Breast epithelium (tissue), 4 donors: ENCODE measurements at regions of chr5 and their contacts with region 1.

Region 1: GRCh38 chr5:168020542-168021294 is 270.7 kb upstream of the WWC1 start:
- DNase-seq: no peak
- H3K4me3 ChIP-seq: no peak overlapping the region
- H3K27ac ChIP-seq: no peak overlapping the region
- H3K4me1 ChIP-seq: no peaks in the 10 kb centered on the region
- H3K27me3 ChIP-seq: peaks cover 0 to 7% of the 10 kb centered on the region in 2 donors
- CTCF ChIP-seq: no peak
- POLR2A ChIP-seq: no peak

Region 2: GRCh38 chr5:167992868-167993267 is 27.9 kb before region 1 on chr5:
- intact Hi-C with region 1: loop called (anchors 1 kb)
- DNase-seq: no peak
- H3K4me3 ChIP-seq: no peak overlapping the region
- H3K27ac ChIP-seq: no peak overlapping the region
- H3K4me1 ChIP-seq: no peaks in the 10 kb centered on the region
- H3K27me3 ChIP-seq: no peaks in the 10 kb centered on the region
- CTCF ChIP-seq: no peak
- POLR2A ChIP-seq: no peak

Region 3: GRCh38 chr5:168006456-168007130 is 14.1 kb before region 1 on chr5:
- intact Hi-C with region 1: loop called (anchors 1 kb)
- DNase-seq: no peak
- H3K4me3 ChIP-seq: no peak overlapping the region
- H3K27ac ChIP-seq: no peak overlapping the region
- H3K4me1 ChIP-seq: no peaks in the 10 kb centered on the region
- H3K27me3 ChIP-seq: no peaks in the 10 kb centered on the region
- CTCF ChIP-seq: no peak
- POLR2A ChIP-seq: no peak

Region 4: DNA sequence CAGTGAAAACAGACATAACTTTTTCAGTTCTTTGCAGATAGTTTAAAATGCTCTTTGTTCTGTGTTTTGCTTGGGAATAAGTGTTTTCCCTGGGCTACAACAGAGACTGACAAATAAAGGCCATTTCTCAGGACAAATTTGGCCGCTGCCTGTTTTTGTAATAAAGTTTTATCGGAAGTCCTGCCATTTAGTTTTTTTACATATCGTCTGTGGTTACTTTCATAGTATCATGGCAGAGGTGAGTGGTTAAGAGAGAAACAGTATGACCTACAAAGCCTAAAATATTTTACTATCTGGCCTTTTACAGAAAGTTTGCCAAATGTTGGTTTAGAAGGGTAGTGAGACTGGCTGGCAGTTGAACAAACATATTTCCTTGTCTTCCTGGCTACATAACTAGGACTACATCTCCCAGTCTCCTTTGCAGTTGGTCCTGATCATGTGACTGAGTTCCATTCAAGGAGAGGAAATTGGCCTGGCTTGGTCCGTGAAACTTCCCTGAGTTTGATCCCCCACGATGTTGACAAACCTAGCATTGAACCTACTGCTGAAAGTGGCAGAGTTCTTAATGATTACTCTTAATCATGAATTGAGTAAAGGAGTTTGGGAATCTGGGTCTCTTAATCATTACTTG is 999.3 kb after region 1 on chr5:
- intact Hi-C with region 1: no loop called
- DNase-seq: no peak
- H3K4me3 ChIP-seq: no peak overlapping the region
- H3K27ac ChIP-seq: no peak overlapping the region
- H3K4me1 ChIP-seq: no peaks in the 10 kb centered on the region
- H3K27me3 ChIP-seq: no peaks in the 10 kb centered on the region
- CTCF ChIP-seq: no peak
- POLR2A ChIP-seq: no peak